PC-9 (cell line): ENCODE measurements at regions of chr16 and their contacts with region 1.

Region 1: GRCh38 chr16:714558-715476 is at the start of gene METRN:
- DNase-seq: peak; percentile 67 to 96
- H3K4me3 ChIP-seq: peak within 1 kb of the TSS; percentile 81
- H3K27ac ChIP-seq: no peak within 1 kb of the TSS; the same call in 1 of the 2 replicates
- H3K4me1 ChIP-seq: peaks cover 51% of the 10 kb centered on the region
- H3K27me3 ChIP-seq: peaks cover 13% of the 10 kb centered on the region
- CTCF ChIP-seq: no peak
- total RNA-seq, gene METRN: 77.5 and 88.5 TPM in 2 replicates

Region 2: DNA sequence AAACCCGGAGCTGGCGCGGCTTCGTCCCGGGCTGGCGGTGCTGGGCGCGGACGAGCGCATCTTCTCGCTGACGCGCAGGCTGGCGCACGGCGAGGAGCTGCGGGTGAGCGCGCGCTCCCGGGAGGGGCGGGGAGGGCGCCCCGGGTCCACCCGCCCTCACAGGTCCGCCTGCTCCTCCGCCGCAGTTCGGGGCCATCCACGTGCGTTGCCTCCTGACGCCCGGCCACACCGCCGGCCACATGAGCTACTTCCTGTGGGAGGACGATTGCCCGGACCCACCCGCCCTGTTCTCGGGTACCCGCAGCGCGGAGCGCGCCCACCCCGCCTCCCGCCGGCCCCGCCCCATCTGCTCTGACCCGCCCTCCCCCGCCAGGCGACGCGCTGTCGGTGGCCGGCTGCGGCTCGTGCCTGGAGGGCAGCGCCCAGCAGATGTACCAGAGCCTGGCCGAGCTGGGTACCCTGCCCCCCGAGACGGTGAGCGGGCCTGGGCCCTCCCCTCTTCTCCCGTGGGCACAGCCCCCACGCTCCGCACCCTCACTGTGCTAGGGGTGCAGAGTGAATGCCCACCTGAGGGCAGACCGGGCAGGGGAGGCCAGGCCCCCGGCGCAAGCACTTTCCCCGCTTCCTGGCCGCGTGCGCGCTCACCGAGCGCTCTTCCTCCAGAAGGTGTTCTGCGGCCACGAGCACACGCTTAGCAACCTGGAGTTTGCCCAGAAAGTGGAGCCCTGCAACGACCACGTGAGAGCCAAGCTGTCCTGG is 13.5 kb after region 1 on chr16:
- CTCF ChIA-PET with region 1: interaction called, 4 read pairs
- POLR2A ChIA-PET with region 1: interaction called, 26 read pairs
- intact Hi-C with region 1: no loop called
- DNase-seq: peak; percentile 70 to 87
- H3K4me3 ChIP-seq: peak overlapping the region; percentile 93; the same call in 1 of the 2 replicates
- H3K27ac ChIP-seq: no peak overlapping the region
- H3K4me1 ChIP-seq: no peaks in the 10 kb centered on the region
- H3K27me3 ChIP-seq: no peaks in the 10 kb centered on the region
- CTCF ChIP-seq: no peak

Region 3: GRCh38 chr16:807347-808084 is 92.7 kb after region 1 on chr16:
- CTCF ChIA-PET with region 1: interaction called, 5 read pairs
- POLR2A ChIA-PET with region 1: interaction called, 19 read pairs
- intact Hi-C with region 1: no loop called
- DNase-seq: peak; percentile 86 to 96
- H3K4me3 ChIP-seq: peak overlapping the region; percentile 97
- H3K27ac ChIP-seq: peak overlapping the region; percentile 76
- H3K4me1 ChIP-seq: 0 out of 2 replicates have a peak, but pooled peaks cover 6% of the 10 kb centered on the region
- H3K27me3 ChIP-seq: peaks cover 4% of the 10 kb centered on the region; the same call in 1 of the 2 replicates
- CTCF ChIP-seq: no peak

Region 4: DNA sequence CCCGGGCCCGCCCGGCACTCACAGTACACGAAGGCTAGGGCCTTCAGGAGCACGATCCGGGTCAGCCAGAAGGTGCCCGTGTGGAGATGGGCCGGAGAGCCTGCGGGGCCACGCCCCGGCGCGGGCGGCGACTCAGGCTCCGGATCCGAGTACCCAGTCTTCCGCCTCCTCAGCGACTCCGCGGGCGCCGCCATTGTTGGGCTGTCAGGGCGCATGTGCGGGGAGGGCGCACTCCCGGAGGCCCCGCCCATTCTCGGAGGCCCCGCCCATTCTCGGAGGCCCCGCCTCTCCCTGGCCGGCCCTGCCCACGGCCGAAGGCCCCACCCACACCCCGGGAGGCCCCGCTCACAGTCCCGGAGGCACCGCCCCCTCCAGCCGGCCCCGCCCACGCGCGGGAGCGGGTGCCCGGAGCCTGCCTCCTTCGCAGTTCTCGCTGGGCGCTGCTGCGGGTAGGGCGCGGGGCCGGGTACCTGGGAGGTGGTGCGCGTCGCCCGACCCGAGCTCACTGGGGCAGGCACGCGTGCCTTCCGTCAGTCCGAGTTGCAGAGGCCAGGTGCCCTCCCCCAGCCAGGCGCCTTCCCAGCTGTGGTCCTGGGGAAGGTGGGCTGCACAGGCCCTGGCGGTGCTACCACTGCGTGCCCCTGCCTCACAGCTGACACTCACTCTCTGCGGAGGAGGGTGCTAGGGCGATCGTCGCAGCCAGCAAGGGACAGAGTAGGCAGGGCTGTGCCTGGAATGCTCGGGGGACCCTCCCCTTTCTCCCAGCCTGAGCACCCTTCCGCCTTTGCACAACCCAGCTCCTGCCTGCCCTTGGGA is 256.2 kb after region 1 on chr16 and contains the start of gene LMF1:
- CTCF ChIA-PET with region 1: no interaction called
- POLR2A ChIA-PET with region 1: no interaction called
- intact Hi-C with region 1: loop called (anchors 5 kb)
- DNase-seq: peak; percentile 67 to 99
- H3K4me3 ChIP-seq: peak within 1 kb of the TSS; percentile 85
- H3K27ac ChIP-seq: peak within 1 kb of the TSS; percentile 30; the same call in 1 of the 2 replicates
- H3K4me1 ChIP-seq: peaks cover 12% of the 10 kb centered on the region
- H3K27me3 ChIP-seq: peaks cover 33% of the 10 kb centered on the region
- CTCF ChIP-seq: no peak
- total RNA-seq, gene LMF1: 31.3 and 35.6 TPM in 2 replicates

Region 5: GRCh38 chr16:1054660-1055556 is 340.1 kb after region 1 on chr16:
- CTCF ChIA-PET with region 1: no interaction called
- POLR2A ChIA-PET with region 1: no interaction called
- intact Hi-C with region 1: loop called (anchors 2 kb)
- DNase-seq: peak in 1 of 2 experiments; percentile 69
- H3K4me3 ChIP-seq: no peak overlapping the region
- H3K27ac ChIP-seq: no peak overlapping the region
- H3K4me1 ChIP-seq: no peaks in the 10 kb centered on the region
- H3K27me3 ChIP-seq: peaks cover 54% of the 10 kb centered on the region
- CTCF ChIP-seq: peak; percentile 90

Region 6: DNA sequence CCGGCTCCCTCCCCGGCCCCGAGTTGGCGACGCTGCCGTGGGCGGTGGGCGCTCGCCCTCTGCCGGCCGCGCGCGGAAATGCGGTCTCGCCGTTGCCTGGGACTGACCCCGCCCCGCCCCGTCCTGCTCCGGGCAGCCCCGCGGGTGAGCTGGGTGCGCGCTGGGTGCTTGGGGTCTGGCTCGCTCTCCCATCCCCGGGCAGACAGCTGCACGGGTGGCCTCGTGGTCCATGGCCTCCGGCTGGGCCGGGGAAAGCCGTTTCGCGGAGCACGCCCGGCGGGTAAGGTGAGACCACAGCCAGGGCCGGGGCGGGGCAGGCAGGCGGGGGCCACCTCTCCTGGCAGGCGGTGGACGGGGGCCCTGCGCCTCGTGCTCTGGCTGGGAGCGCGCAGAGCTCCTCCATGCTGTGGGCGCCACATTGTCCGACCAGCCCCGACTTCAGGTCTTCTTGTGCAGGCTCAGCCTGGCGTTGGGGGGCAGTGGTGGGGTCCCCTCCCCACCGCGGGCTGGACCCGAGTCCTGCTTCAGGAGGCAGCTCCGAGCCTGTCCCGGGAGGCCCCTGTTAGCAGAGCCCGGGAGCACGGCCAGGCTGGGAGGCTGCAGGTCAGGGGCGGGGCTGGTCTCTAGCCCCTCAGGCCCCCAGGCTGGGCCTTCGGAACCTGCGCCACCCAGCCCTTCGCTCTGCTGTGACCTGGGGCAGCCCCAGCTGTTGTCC is 388.3 kb after region 1 on chr16:
- CTCF ChIA-PET with region 1: interaction called, 3 read pairs
- POLR2A ChIA-PET with region 1: no interaction called
- intact Hi-C with region 1: loop called (anchors 2 kb)
- DNase-seq: peak in 1 of 2 experiments; percentile 79
- H3K4me3 ChIP-seq: no peak overlapping the region
- H3K27ac ChIP-seq: no peak overlapping the region
- H3K4me1 ChIP-seq: no peaks in the 10 kb centered on the region
- H3K27me3 ChIP-seq: peaks cover 49% of the 10 kb centered on the region
- CTCF ChIP-seq: peak; percentile 67

Region 7: DNA sequence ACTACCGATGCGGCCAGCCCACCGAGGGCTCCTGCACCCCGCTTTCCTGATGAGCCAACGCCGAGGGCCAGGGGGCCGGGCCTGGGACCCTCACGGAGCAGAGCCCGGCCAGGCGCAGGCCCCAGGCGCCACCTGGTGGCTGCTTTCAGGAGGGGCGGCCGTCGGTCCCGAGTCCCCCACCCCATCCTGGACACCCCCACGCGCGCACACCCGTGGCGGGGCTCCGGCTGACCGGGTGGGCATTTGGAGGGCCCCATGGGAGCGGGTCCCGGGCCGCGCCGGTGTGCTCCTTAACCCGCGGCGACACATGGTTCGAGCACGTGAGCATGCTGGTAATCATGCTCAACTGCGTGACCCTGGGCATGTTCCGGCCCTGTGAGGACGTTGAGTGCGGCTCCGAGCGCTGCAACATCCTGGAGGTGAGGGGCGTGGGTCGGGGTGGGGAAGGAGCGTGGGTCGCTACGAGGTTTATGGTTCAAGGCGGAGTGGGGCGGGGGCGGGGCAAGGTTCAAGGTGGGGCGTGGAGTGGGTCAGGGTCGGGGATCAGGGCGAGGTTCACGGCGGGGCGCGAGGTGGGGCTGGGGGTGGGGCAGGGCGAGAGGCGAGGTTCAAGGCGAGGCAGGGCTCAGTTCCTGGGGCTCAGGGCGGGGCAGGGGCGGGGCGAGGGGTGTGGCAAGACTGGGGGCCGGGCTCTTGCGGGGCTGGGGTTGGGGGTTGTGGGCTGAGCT is 480.0 kb after region 1 on chr16:
- CTCF ChIA-PET with region 1: no interaction called
- POLR2A ChIA-PET with region 1: no interaction called
- intact Hi-C with region 1: no loop called
- DNase-seq: no peak
- H3K4me3 ChIP-seq: no peak overlapping the region
- H3K27ac ChIP-seq: no peak overlapping the region
- H3K4me1 ChIP-seq: no peaks in the 10 kb centered on the region
- H3K27me3 ChIP-seq: 0 out of 2 replicates have a peak, but pooled peaks cover 6% of the 10 kb centered on the region
- CTCF ChIP-seq: peak; percentile 81